ENCODE measurements at regions of chr17 and their contacts with region 1.

Region 1: GRCh38 chr17:44324571-44325275 is at the start of gene SLC25A39:
- DNase-seq: peak; percentile 89 to 99 (median 97)
- ATAC-seq: peak; percentile 86 to 91 (median 86)
- H3K4me3 ChIP-seq: peak within 1 kb of the TSS; percentile 76 to 100 (median 89)
- H3K27ac ChIP-seq: peak within 1 kb of the TSS; percentile 84 to 96 (median 88)
- H3K4me1 ChIP-seq: peaks cover 0 to 8% (median 6%) of the 10 kb centered on the region in 3 donors
- H3K27me3 ChIP-seq: no peaks in the 10 kb centered on the region
- CTCF ChIP-seq: no peak
- total RNA-seq, gene SLC25A39: 50.7 to 72.7 (median 62.2) TPM

Region 2: GRCh38 chr17:44218344-44219107 is 106.2 kb before region 1 on chr17:
- intact Hi-C with region 1: loop called in 2 of 3 experiments (anchors 5 to 10 kb)
- DNase-seq: peak; percentile 86 to 93 (median 90)
- ATAC-seq: peak; percentile 51 to 75 (median 69)
- H3K4me3 ChIP-seq: peak overlapping the region; percentile 57 to 95 (median 88)
- H3K27ac ChIP-seq: peak overlapping the region; percentile 93 to 98 (median 97)
- H3K4me1 ChIP-seq: peaks cover 6 to 23% (median 23%) of the 10 kb centered on the region in 3 donors
- H3K27me3 ChIP-seq: no peaks in the 10 kb centered on the region
- CTCF ChIP-seq: peak; percentile 21 to 59 (median 32)